ENCODE measurements at regions of chr7 and their contacts with region 1.

Region 1: GRCh38 chr7:127629268-127629854 is 11.4 kb upstream of the PAX4 start:
- DNase-seq: peak; percentile 91
- ATAC-seq: peak; percentile 99
- H3K4me3 Mint-ChIP-seq: peak overlapping the region; percentile 33
- H3K27ac Mint-ChIP-seq: no peak overlapping the region
- H3K4me1 Mint-ChIP-seq: peaks cover 11% of the 10 kb centered on the region
- H3K27me3 Mint-ChIP-seq: peaks cover 29% of the 10 kb centered on the region
- CTCF ChIP-seq: peak; percentile 63

Region 2: DNA sequence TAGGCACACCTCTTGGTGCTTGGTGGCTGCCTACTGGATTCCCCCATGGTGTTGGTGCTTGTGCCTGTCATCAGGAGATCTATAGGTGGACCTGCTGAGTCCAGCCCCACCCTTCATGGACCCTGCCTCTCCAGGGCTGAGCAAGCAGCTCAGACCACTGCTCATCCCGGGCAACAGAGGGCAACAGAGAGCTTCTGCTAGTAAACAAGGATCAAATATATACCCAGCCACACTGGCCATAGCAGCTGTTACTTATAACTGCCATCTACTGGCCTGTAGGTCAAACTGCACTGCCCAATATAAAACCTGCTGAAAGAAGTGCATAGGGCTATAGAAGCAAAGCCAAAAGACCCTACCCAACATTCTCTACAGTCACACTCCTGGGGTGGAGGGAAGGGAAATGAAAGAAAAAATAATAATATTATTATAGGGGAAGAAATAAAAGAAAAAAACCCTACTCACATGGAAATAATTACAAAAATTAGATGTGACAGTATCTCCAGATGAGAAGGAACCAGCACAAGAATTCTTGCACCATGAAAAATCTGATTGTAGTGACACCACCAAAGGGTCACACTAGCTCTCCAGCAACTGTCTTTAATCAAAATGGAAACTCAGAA is 181.9 kb before region 1 on chr7:
- CTCF ChIA-PET with region 1: interaction called, 10 read pairs
- POLR2A ChIA-PET with region 1: no interaction called
- DNase-seq: peak; percentile 68
- ATAC-seq: peak; percentile 100
- H3K4me3 Mint-ChIP-seq: no peak overlapping the region
- H3K27ac Mint-ChIP-seq: no peak overlapping the region
- H3K4me1 Mint-ChIP-seq: no peaks in the 10 kb centered on the region
- H3K27me3 Mint-ChIP-seq: peaks cover 44% of the 10 kb centered on the region
- CTCF ChIP-seq: peak; percentile 72

Region 3: DNA sequence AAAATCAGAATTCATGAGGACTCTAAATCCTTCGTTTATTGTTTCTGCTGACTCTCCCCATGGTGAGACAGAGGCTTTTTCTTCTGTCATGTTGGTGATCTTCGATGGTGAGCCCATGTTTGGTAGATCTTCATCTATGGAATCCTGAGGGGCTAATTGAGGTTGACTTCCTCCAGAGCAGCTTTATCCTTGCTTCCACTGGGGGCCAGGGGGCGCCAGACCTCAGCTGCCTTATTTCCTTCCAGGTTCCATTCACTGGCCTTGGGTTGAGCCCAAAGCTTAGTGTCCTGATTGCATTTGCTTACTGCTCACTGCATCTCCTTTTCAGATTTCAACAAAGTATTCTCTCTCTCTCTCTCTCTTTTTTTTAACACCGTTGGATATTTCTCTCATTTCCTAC is 124.6 kb before region 1 on chr7:
- CTCF ChIA-PET with region 1: interaction called, 16 read pairs
- POLR2A ChIA-PET with region 1: interaction called, 3 read pairs
- DNase-seq: peak; percentile 73
- ATAC-seq: peak; percentile 96
- H3K4me3 Mint-ChIP-seq: no peak overlapping the region
- H3K27ac Mint-ChIP-seq: no peak overlapping the region
- H3K4me1 Mint-ChIP-seq: no peaks in the 10 kb centered on the region
- H3K27me3 Mint-ChIP-seq: peaks cover 55% of the 10 kb centered on the region
- CTCF ChIP-seq: peak; percentile 65

Region 4: DNA sequence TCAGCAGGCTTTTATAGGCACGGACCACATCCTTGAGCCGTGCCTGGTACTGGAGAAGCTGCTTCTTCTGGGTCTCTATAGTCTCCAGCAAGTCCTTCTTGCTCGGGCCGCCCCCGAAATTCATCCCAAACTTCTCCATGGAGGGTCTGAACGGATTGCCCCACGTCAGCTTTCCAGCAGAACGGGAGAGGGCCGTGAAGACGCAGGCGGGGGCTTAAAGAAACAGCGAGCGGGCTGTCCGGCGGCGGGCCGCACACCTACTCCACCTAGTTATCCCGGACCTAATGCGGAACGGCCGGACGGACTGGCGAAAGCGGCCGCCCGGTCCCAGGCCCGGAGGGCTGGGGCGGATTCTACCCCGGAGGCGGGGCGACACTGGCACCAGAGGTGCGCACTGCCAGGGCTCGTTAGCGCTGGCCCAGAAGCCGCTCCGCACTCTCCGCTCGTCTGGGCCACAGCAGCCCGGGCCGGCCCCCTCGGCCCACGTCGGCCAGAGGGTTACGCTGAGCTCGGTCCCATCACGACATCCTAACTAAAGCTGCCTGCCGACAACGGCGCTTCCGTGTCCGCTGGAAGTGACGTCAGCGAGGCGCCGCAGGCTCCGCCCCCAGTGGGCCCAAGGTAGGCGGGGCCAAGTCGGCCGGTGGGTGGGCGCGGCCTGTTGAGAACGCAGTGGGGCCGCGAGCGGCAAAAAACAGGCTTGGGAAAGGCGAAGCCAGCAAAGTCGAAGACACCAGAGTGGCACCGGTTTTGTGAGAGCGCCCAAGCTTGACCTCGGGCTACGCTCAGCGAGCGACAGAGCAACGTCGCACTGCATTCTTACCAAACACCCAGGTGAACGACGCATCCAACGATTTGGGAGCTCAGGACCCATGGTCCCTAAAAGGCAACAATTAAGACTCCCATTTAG is 44.1 kb before region 1 on chr7 and contains the start of gene GCC1:
- CTCF ChIA-PET with region 1: interaction called, 43 read pairs
- POLR2A ChIA-PET with region 1: interaction called, 5 read pairs
- DNase-seq: peak; percentile 95
- ATAC-seq: peak; percentile 64
- H3K4me3 Mint-ChIP-seq: peak within 1 kb of the TSS; percentile 90
- H3K27ac Mint-ChIP-seq: peak within 1 kb of the TSS; percentile 23
- H3K4me1 Mint-ChIP-seq: peaks cover 33% of the 10 kb centered on the region
- H3K27me3 Mint-ChIP-seq: peaks cover 24% of the 10 kb centered on the region
- CTCF ChIP-seq: no peak
- total RNA-seq, gene GCC1: 13.2 to 13.7 TPM (median 13.6 TPM) in 3 replicates

Region 5: DNA sequence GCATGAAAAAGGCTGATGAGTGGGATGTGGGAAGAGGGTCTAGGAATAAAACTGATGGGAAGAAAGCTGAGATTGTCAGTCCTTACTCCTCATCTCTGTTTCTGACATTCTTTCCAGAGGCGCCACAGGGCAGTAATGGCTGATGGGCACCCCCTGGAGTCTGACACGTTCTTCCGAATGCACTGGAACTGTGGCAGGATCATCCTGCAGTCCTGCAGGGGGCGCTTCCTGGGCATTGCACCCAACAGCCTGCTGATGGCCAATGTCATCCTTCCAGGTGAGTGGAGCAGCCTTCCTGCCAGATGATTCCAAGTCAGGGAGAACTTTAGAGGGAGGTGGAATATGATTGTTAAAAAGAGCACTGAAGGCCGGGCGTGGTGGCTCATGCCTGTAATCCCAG is 31.0 kb before region 1 on chr7:
- CTCF ChIA-PET with region 1: interaction called, 11 read pairs
- POLR2A ChIA-PET with region 1: no interaction called
- DNase-seq: peak; percentile 80
- ATAC-seq: peak; percentile 91
- H3K4me3 Mint-ChIP-seq: no peak overlapping the region
- H3K27ac Mint-ChIP-seq: no peak overlapping the region
- H3K4me1 Mint-ChIP-seq: peaks cover 19% of the 10 kb centered on the region
- H3K27me3 Mint-ChIP-seq: peaks cover 8% of the 10 kb centered on the region; the same call in 1 of the 2 replicates
- CTCF ChIP-seq: peak; percentile 77

Region 6: GRCh38 chr7:127647636-127648035 is 18.3 kb after region 1 on chr7:
- CTCF ChIA-PET with region 1: interaction called, 28 read pairs
- POLR2A ChIA-PET with region 1: no interaction called
- DNase-seq: no peak
- ATAC-seq: no peak
- H3K4me3 Mint-ChIP-seq: no peak overlapping the region
- H3K27ac Mint-ChIP-seq: no peak overlapping the region
- H3K4me1 Mint-ChIP-seq: peaks cover 3% of the 10 kb centered on the region; the same call in 1 of the 2 replicates
- H3K27me3 Mint-ChIP-seq: peaks cover 3% of the 10 kb centered on the region; the same call in 1 of the 2 replicates
- CTCF ChIP-seq: no peak

Region 7: DNA sequence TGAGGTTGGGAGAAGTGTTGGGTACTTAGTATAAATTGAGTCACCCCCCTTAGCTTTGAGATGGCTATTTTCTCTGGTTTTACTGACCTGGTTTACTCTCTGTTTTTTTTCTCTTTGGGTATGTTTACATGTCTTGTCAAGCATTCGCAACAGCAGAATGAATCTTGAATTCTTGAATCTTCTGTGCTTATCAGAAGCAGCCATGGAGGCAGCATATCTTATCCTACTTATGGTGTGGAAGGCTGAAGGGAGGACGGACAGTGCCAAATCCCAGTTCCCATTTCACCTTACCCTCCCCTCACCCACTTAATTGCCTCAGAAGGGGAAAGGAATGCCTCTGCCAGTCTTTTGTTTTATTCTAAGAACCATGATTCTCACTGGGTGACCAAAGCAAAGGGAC is 26.4 kb after region 1 on chr7:
- CTCF ChIA-PET with region 1: interaction called, 11 read pairs
- POLR2A ChIA-PET with region 1: no interaction called
- DNase-seq: no peak
- ATAC-seq: no peak
- H3K4me3 Mint-ChIP-seq: no peak overlapping the region
- H3K27ac Mint-ChIP-seq: peak overlapping the region; percentile 43; the same call in 1 of the 2 replicates
- H3K4me1 Mint-ChIP-seq: peaks cover 47% of the 10 kb centered on the region
- H3K27me3 Mint-ChIP-seq: no peaks in the 10 kb centered on the region
- CTCF ChIP-seq: no peak

Measured in WTC11 (cell line).